Activated CD4-positive, alpha-beta memory T cell treated with anti-CD3 and anti-CD28 coated beads for 36 hours (primary cell): ENCODE measurements at regions of chr15 and their contacts with region 1.

Region 1: GRCh38 chr15:44711356-44712107 is at the start of gene B2M:
- DNase-seq: peak; percentile 96
- H3K4me3 Mint-ChIP-seq: peak within 1 kb of the TSS; percentile 88
- H3K27ac Mint-ChIP-seq: peak within 1 kb of the TSS; percentile 100
- H3K4me1 Mint-ChIP-seq: peaks cover 42% of the 10 kb centered on the region
- H3K27me3 Mint-ChIP-seq: peaks cover 5% of the 10 kb centered on the region
- total RNA-seq, gene B2M: 6,098 to 6,314 TPM

Region 2: DNA sequence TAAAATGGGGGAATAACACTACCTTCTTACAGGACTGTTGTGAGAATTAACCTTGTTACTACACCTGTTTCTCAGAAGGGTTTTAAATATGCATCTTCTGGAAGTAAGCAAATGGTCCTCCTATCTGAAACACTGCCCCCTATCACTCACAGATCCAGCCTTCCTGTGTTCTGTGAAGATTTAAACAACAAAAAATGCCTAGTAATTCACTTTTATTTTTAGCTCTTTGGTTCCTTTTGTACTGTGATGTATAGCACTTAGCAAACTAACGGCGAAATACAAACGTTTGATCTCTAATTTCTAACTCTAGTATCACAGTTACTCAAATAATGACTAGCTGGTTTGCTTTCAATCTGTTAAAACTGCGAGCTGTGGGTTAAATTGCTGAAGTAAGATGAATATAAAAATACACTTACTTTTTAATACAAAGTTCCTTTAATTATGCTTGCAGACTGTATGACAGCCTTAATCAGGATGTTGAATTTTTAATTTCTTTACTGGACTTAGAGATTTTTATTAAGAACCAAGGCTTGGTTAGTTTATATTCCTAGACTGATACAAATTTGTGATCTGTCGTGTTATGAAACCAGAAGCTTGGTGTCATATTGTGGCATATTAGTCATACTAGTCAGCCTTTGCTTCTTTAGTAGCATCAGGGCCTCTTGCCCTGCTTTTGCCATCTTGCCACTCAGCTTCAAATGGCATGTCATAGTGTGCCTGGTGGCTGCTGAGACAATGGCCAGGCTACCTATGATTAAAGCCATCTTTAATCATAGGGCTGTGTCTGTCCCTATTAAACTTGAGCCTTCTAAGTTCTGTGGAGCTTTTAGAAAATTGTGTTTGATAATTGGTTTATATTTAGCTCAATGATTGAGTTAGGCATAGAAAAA is 165.4 kb before region 1 on chr15:
- CTCF ChIA-PET with region 1: no interaction called
- POLR2A ChIA-PET with region 1: interaction called, 8 read pairs
- intact Hi-C with region 1: loop called (anchors 1 kb)
- DNase-seq: peak; percentile 76
- H3K4me3 Mint-ChIP-seq: peak overlapping the region; percentile 35
- H3K27ac Mint-ChIP-seq: peak overlapping the region; percentile 74
- H3K4me1 Mint-ChIP-seq: peaks cover 50% of the 10 kb centered on the region
- H3K27me3 Mint-ChIP-seq: no peaks in the 10 kb centered on the region

Region 3: DNA sequence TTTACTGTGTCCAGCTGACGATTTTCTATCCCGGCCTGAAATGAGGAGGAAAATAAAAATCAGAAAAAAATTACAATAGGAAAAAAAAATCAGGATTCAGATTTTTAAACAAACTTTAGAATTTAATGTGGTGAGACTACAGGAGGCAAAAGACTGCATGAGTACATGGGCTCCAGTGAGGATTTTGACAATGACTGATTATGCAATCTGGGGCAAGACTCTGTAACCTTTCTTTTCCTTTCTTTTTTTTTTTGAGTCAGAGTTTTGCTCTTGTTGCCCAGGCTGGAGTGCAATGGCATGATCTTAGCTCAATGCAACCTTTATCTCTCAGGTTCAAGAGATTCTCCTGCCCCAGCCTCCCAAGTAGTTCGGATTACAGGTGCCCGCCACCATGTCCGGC is 77.9 kb before region 1 on chr15:
- CTCF ChIA-PET with region 1: interaction called, 3 read pairs
- POLR2A ChIA-PET with region 1: interaction called, 5 read pairs
- intact Hi-C with region 1: loop called (anchors 2 kb)
- DNase-seq: peak; percentile 18
- H3K4me3 Mint-ChIP-seq: peak overlapping the region; percentile 70
- H3K27ac Mint-ChIP-seq: peak overlapping the region; percentile 96
- H3K4me1 Mint-ChIP-seq: peaks cover 23% of the 10 kb centered on the region
- H3K27me3 Mint-ChIP-seq: no peaks in the 10 kb centered on the region

Region 4: DNA sequence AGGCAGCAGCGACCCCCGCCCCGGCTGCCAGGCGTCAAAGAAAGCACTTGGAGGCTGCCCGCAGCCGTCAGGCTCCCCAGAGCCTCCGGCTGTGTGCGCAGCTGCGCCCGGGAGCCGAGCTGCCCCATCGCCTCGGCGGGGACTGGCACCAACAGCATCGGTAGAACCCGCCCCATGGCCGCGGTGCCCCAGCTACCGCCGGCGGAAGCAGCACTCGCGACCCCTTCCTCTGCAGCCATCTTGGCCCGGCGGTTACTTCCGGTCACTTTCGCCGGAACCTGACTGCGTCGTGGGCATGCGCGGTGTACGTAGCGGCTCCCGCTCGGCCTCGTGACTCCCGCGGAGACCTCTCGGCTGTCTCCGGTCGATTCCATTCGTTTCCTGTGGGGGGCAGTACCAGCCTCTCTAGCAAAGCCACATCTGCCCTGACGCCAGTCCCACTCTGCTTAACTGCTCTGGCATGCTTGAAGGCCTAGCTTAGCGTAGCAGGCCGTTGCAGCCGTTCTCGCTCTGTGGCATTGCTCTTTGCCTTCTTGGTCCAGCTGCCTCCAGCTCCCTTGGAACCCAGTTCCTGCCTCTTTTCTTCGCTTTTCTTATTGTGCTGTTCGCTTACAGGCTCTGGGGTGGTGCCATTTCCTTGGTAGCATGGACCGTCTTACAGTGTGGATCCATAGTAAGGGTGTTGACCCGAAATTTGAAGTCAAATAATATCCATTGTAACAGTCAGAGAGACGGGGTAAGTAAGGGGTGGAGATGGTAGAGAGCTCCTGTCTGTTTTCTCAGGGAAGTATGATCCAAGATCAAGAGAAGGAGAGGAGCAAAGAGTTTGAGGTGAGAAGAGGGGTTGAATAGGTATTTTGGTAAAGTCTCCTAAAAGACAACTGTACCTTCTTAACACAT is 47.9 kb before region 1 on chr15 and contains the start of gene SPG11:
- CTCF ChIA-PET with region 1: interaction called, 312 read pairs
- POLR2A ChIA-PET with region 1: interaction called, 400 read pairs
- intact Hi-C with region 1: loop called (anchors 1 kb)
- DNase-seq: peak; percentile 99
- H3K4me3 Mint-ChIP-seq: peak within 1 kb of the TSS; percentile 97
- H3K27ac Mint-ChIP-seq: peak within 1 kb of the TSS; percentile 97
- H3K4me1 Mint-ChIP-seq: peaks cover 58% of the 10 kb centered on the region
- H3K27me3 Mint-ChIP-seq: no peaks in the 10 kb centered on the region
- total RNA-seq, gene SPG11: 84.6 to 86.8 TPM

Region 5: DNA sequence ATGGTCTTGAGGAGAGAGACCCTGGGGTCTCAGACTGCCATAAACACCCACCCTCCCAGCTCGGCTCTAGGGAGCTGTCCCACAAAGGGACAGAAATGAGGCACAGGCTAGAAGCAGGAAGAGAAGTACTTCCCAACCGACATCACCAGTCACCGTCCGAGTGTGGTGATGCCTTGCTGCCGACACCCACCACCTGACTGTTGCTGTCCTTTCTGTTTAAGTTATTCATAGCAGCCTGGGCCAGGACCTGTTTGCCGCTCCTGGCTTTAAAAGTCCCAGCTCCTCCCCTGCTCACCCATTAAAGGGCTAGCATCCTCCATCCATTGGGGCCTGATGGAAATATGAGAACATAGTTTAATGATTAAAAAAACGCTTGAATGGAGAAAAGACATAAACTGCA is 34.9 kb before region 1 on chr15:
- CTCF ChIA-PET with region 1: interaction called, 22 read pairs
- POLR2A ChIA-PET with region 1: interaction called, 67 read pairs
- intact Hi-C with region 1: loop called (anchors 1 kb)
- DNase-seq: peak; percentile 77
- H3K4me3 Mint-ChIP-seq: peak overlapping the region; percentile 74
- H3K27ac Mint-ChIP-seq: peak overlapping the region; percentile 95
- H3K4me1 Mint-ChIP-seq: peaks cover 83% of the 10 kb centered on the region
- H3K27me3 Mint-ChIP-seq: no peaks in the 10 kb centered on the region

Region 6: GRCh38 chr15:44682211-44682610 is 29.3 kb before region 1 on chr15:
- CTCF ChIA-PET with region 1: interaction called, 22 read pairs
- POLR2A ChIA-PET with region 1: interaction called, 67 read pairs
- intact Hi-C with region 1: loop called (anchors 1 kb)
- DNase-seq: peak; percentile 32
- H3K4me3 Mint-ChIP-seq: peak overlapping the region; percentile 68
- H3K27ac Mint-ChIP-seq: peak overlapping the region; percentile 94
- H3K4me1 Mint-ChIP-seq: peaks cover 73% of the 10 kb centered on the region
- H3K27me3 Mint-ChIP-seq: no peaks in the 10 kb centered on the region

Region 7: DNA sequence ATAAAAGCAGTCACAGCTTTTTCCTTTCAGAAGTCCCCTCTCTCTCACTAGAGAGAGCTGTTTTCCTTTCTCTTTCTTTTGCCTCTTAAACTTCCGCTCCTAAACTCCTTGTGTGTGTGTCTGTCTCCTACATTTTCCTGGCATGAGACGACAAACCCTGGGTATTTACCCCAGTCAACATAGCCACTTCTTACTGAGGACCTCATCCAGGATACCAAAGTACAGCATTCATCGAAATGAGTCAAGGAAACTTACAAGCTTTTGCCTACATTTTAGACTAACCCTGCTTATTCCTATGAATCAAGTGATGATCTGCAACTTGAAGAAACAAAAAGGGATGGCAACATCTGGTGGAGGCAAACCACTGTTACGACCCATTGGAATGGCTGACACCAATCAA is 17.1 kb before region 1 on chr15:
- CTCF ChIA-PET with region 1: interaction called, 7 read pairs
- POLR2A ChIA-PET with region 1: interaction called, 10 read pairs
- intact Hi-C with region 1: no loop called
- DNase-seq: no peak
- H3K4me3 Mint-ChIP-seq: no peak overlapping the region
- H3K27ac Mint-ChIP-seq: no peak overlapping the region
- H3K4me1 Mint-ChIP-seq: peaks cover 20% of the 10 kb centered on the region
- H3K27me3 Mint-ChIP-seq: no peaks in the 10 kb centered on the region

Region 8: DNA sequence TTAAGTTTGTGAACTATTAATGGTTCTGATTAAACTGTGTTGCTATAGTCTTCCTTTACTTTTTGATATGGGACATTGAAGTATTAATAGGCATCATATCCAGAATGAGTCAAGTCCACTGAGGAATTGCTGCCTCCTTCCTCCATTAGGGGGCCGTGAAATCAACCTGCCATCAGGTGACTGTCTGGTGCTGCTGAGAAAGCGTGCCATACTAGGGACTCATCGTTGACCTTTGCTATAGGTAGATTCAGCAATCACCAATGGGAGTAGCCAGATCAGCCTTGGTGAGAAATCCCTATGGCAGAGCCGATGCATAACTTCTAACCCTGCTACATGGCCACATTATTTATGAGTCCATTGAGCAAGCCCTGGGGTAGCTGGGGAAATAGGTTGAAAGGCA is 510.4 kb after region 1 on chr15:
- CTCF ChIA-PET with region 1: no interaction called
- POLR2A ChIA-PET with region 1: no interaction called
- intact Hi-C with region 1: no loop called
- DNase-seq: no peak
- H3K4me3 Mint-ChIP-seq: no peak overlapping the region
- H3K27ac Mint-ChIP-seq: no peak overlapping the region
- H3K4me1 Mint-ChIP-seq: no peaks in the 10 kb centered on the region
- H3K27me3 Mint-ChIP-seq: peaks cover 29% of the 10 kb centered on the region